ENCODE measurements at regions of chr1 and their contacts with region 1.

Region 1: GRCh38 chr1:207868774-207869721 is 41.9 kb downstream of the CD34 start:
- DNase-seq: peak; percentile 43 to 92 (median 67)
- ATAC-seq: peak; percentile 63
- H3K4me3 ChIP-seq: peak overlapping the region; percentile 98
- H3K4me3 Mint-ChIP-seq: peak overlapping the region; percentile 95
- H3K27ac ChIP-seq: peak overlapping the region; percentile 74 to 89
- H3K27ac Mint-ChIP-seq: peak overlapping the region; percentile 95
- H3K4me1 ChIP-seq: peaks cover 87% of the 10 kb centered on the region
- H3K4me1 Mint-ChIP-seq: peaks cover 85% of the 10 kb centered on the region
- H3K27me3 ChIP-seq: no peaks in the 10 kb centered on the region
- H3K27me3 Mint-ChIP-seq: no peaks in the 10 kb centered on the region
- CTCF ChIP-seq: peak; percentile 60

Region 2: DNA sequence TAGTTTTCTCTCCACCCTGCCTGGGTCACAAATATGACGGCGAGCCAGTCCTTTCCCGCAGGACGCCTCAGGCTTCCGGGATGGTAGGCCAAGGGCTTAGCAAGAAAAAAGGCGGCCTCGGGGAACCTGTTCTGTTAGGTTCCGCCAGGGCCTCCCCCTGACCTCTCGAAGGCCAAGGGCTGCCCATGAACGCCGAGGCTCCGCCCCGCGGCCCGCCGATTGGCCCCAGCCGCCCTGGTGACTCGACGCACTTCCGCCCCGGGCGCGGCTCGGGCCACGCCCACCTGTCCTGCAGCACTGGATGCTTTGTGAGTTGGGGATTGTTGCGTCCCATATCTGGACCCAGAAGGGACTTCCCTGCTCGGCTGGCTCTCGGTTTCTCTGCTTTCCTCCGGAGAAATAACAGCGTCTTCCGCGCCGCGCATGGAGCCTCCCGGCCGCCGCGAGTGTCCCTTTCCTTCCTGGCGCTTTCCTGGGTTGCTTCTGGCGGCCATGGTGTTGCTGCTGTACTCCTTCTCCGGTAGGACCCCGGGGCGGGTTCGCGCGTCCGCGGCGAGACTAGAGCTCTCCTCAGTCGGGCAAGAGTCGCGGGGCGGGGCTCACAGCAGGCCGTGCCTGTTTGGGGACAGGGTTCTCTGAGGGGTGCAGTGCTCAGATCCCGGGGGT is 117.1 kb before region 1 on chr1 and contains the start of gene CD46:
- CTCF ChIA-PET with region 1: interaction called, 3 read pairs
- POLR2A ChIA-PET with region 1: interaction called, 3 read pairs
- intact Hi-C with region 1: loop called in 1 of 2 experiments (anchors 5 kb)
- DNase-seq: peak; percentile 85 to 97 (median 92)
- ATAC-seq: peak; percentile 95
- H3K4me3 ChIP-seq: peak within 1 kb of the TSS; percentile 97
- H3K4me3 Mint-ChIP-seq: peak within 1 kb of the TSS; percentile 95
- H3K27ac ChIP-seq: peak within 1 kb of the TSS; percentile 66 to 85
- H3K27ac Mint-ChIP-seq: peak within 1 kb of the TSS; percentile 89
- H3K4me1 ChIP-seq: peaks cover 35% of the 10 kb centered on the region
- H3K4me1 Mint-ChIP-seq: peaks cover 84% of the 10 kb centered on the region
- H3K27me3 ChIP-seq: no peaks in the 10 kb centered on the region
- H3K27me3 Mint-ChIP-seq: no peaks in the 10 kb centered on the region
- CTCF ChIP-seq: no peak
- total RNA-seq, gene CD46: 111 to 115 TPM

Region 3: GRCh38 chr1:207818971-207819451 is 50.0 kb before region 1 on chr1:
- CTCF ChIA-PET with region 1: interaction called, 53 read pairs
- POLR2A ChIA-PET with region 1: interaction called, 158 read pairs
- intact Hi-C with region 1: no loop called
- DNase-seq: no peak
- ATAC-seq: no peak
- H3K4me3 ChIP-seq: no peak overlapping the region
- H3K4me3 Mint-ChIP-seq: no peak overlapping the region
- H3K27ac ChIP-seq: no peak overlapping the region
- H3K27ac Mint-ChIP-seq: peak overlapping the region; percentile 73
- H3K4me1 ChIP-seq: peaks cover 90% of the 10 kb centered on the region
- H3K4me1 Mint-ChIP-seq: peaks cover 76% of the 10 kb centered on the region
- H3K27me3 ChIP-seq: no peaks in the 10 kb centered on the region
- H3K27me3 Mint-ChIP-seq: peaks cover 4% of the 10 kb centered on the region
- CTCF ChIP-seq: no peak

Region 4: GRCh38 chr1:207848234-207848633 is 20.8 kb before region 1 on chr1:
- CTCF ChIA-PET with region 1: interaction called, 21 read pairs
- POLR2A ChIA-PET with region 1: interaction called, 6 read pairs
- intact Hi-C with region 1: no loop called
- DNase-seq: peak in 4 of 14 experiments; percentile 49 to 75 (median 62)
- ATAC-seq: peak; percentile 63
- H3K4me3 ChIP-seq: no peak overlapping the region
- H3K4me3 Mint-ChIP-seq: peak overlapping the region; percentile 42
- H3K27ac ChIP-seq: no peak overlapping the region
- H3K27ac Mint-ChIP-seq: peak overlapping the region; percentile 61
- H3K4me1 ChIP-seq: peaks cover 72% of the 10 kb centered on the region
- H3K4me1 Mint-ChIP-seq: peaks cover 96% of the 10 kb centered on the region
- H3K27me3 ChIP-seq: no peaks in the 10 kb centered on the region
- H3K27me3 Mint-ChIP-seq: no peaks in the 10 kb centered on the region
- CTCF ChIP-seq: no peak

Region 5: GRCh38 chr1:207885129-207886032 is 16.3 kb after region 1 on chr1:
- CTCF ChIA-PET with region 1: interaction called, 115 read pairs
- POLR2A ChIA-PET with region 1: interaction called, 102 read pairs
- intact Hi-C with region 1: loop called in 1 of 2 experiments (anchors 2 kb)
- DNase-seq: peak; percentile 54 to 89 (median 62)
- ATAC-seq: peak; percentile 78
- H3K4me3 ChIP-seq: no peak overlapping the region
- H3K4me3 Mint-ChIP-seq: peak overlapping the region; percentile 76
- H3K27ac ChIP-seq: no peak overlapping the region
- H3K27ac Mint-ChIP-seq: peak overlapping the region; percentile 92
- H3K4me1 ChIP-seq: peaks cover 32% of the 10 kb centered on the region
- H3K4me1 Mint-ChIP-seq: peaks cover 38% of the 10 kb centered on the region
- H3K27me3 ChIP-seq: no peaks in the 10 kb centered on the region
- H3K27me3 Mint-ChIP-seq: peaks cover 5% of the 10 kb centered on the region
- CTCF ChIP-seq: peak; percentile 98

Region 6: DNA sequence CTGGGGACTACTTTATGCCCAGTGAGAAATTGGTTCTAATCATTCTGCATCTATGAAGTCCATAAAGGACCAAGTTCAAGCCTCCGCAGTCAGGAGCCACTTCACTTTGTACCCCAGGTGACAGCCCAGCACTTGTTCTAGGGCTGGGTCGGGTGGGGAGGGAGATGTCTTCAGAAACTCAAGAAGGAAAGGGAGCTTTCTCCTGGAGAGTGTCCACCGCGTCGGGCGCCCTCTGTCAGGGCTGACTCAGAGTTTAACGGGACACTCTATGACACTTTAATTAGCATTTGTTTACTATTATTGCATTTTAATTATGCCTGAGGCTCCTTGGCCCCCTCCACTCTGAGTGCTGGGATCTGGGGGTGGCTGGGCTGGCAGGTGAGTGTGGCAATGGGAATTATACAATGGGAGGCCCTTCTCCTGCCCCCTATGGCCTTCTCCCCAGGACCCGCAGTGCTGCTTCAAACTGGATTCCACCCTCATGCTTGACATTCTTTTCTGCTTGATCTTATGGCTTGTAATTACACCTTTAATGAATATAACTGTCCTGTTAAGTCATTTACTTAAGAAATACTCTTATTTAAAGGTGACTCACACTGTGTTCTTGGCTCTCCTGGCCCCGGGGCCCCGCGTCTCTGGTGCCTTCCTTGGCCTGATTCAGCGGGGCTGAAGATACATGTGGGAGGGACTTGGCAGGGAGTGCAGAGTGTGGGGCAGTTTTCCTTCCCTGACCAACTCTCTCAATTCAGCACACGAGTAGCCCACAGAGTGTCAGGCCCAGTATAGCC is 238.6 kb after region 1 on chr1:
- CTCF ChIA-PET with region 1: no interaction called
- POLR2A ChIA-PET with region 1: no interaction called
- intact Hi-C with region 1: no loop called
- DNase-seq: no peak
- ATAC-seq: no peak
- H3K4me3 ChIP-seq: no peak overlapping the region
- H3K4me3 Mint-ChIP-seq: no peak overlapping the region
- H3K27ac ChIP-seq: no peak overlapping the region
- H3K27ac Mint-ChIP-seq: no peak overlapping the region
- H3K4me1 ChIP-seq: no peaks in the 10 kb centered on the region
- H3K4me1 Mint-ChIP-seq: no peaks in the 10 kb centered on the region
- H3K27me3 ChIP-seq: peaks cover 0 to 2% of the 10 kb centered on the region in 2 experiments
- H3K27me3 Mint-ChIP-seq: no peaks in the 10 kb centered on the region
- CTCF ChIP-seq: no peak